Ascending aorta (tissue), 2 donors: ENCODE measurements at regions of chr10 and their contacts with region 1.

Region 1: GRCh38 chr10:5623081-5623748 is 43.2 kb downstream of the ASB13 start:
- DNase-seq: peak in 1 of 2 donors; percentile 93
- H3K4me3 ChIP-seq: no peak overlapping the region
- H3K27ac ChIP-seq: peak overlapping the region; percentile 52 to 65
- H3K4me1 ChIP-seq: peaks cover 12 to 51% of the 10 kb centered on the region in 2 donors
- H3K27me3 ChIP-seq: no peaks in the 10 kb centered on the region
- CTCF ChIP-seq: peak; percentile 91 to 93 (median 92)

Region 2: DNA sequence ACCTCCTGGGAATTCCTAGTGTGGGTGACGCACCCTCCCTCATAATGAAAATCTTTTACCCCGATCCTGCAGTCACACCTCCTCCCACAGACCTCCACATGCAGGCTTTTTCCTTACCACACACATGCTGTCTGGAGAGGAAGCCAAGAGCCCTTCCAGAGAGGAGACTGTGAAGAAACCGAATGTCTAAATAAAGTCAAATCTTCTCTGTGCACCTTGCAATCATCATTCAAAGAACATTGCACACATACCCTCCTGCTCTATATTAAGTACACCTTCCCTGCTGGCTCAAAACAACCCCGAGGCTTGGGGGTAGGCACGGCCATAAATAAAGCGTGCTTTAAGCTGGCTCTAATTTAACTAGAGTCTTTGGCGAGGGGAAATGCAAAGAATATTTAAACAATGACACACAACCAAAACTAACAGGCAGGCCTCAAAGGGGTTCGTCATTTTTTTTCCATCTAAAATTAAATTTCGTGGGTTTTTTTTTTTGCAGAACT is 63.5 kb before region 1 on chr10:
- intact Hi-C with region 1: loop called (anchors 2 kb)
- DNase-seq: peak in 1 of 2 donors; percentile 69
- H3K4me3 ChIP-seq: peak overlapping the region in 1 of 2 donors; percentile 20
- H3K27ac ChIP-seq: peak overlapping the region; percentile 82 to 91
- H3K4me1 ChIP-seq: peaks cover 35 to 72% of the 10 kb centered on the region in 2 donors
- H3K27me3 ChIP-seq: no peaks in the 10 kb centered on the region
- CTCF ChIP-seq: no peak